BJ (cell line): ENCODE measurements at regions of chr10 and their contacts with region 1.

Region 1: DNA sequence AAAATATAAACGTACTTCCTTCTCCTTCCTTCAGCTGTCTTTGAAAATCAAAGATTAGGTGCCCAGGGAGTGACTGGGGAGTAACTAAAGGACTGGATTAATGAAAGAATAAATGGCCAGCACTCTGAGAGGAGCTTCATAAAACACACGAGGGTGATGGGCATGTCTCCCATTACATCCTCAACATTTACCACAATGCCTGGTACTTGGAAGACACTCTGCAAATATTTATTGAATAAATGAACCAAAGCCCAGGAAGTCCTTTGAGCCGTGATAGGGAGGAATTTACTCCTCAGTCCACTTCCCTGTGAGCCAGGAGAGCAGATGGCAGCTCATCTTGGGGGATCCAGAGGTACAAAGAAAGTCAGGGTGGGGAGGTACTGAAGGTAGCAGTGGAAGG is 96.3 kb downstream of the RAB11FIP2 start:
- DNase-seq: no peak
- H3K4me3 ChIP-seq: no peak overlapping the region
- H3K27me3 ChIP-seq: no peaks in the 10 kb centered on the region
- CTCF ChIP-seq: no peak

Region 2: GRCh38 chr10:117936141-117936540 is 14.3 kb before region 1 on chr10:
- CTCF ChIA-PET with region 1: no interaction called
- POLR2A ChIA-PET with region 1: interaction called, 38 read pairs
- DNase-seq: peak; percentile 48
- H3K4me3 ChIP-seq: no peak overlapping the region
- H3K27me3 ChIP-seq: peaks cover 1% of the 10 kb centered on the region; the same call in 1 of the 2 replicates
- CTCF ChIP-seq: no peak

Region 3: GRCh38 chr10:117968354-117969182 is 18.2 kb after region 1 on chr10:
- CTCF ChIA-PET with region 1: no interaction called
- POLR2A ChIA-PET with region 1: no interaction called
- DNase-seq: no peak
- H3K4me3 ChIP-seq: no peak overlapping the region
- H3K27me3 ChIP-seq: no peaks in the 10 kb centered on the region
- CTCF ChIP-seq: no peak